Posterior vena cava (tissue), 2 donors: ENCODE measurements at regions of chr4 and their contacts with region 1.

Region 1: DNA sequence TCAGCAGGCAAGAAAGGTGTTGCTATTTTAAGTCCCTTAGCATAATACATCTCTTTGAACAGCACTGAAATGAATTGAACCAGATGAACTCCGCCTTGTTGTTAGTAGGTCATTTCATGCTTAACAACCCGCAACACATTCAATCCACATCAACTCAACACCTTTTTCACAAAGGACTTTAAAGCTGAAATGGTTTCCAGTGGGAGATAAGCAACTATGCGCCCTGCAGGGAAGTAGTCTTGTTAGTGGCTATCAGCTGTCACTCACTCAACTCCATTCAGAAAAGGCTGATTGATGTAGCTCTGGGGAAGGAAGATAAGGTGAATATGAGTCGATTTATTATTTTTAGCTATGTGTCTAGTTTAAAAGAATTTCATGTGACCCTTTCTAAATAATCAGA is 46.0 kb downstream of the ATP8A1 start:
- DNase-seq: no peak

Region 2: DNA sequence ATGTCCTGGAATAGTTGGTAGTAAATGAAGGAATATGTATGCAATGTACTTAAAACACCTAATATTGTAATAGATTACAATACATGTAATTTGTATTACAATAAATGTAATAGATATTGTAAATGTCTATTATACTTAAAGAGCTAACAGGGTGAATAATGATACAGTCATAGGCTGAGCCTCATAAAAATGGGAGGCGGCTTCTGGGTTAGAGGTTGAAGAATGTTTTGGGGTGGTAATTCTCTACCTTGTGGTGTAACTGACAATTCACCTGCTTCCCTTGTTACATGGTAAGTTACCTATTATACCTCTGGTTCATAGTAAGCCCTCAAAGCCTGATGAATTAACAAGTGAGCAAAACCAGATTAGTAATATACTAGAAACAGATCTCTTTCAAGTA is 20.0 kb after region 1 on chr4:
- intact Hi-C with region 1: loop called in 1 of 2 experiments (anchors 1 kb)
- DNase-seq: no peak